Psoas muscle (tissue), 8 donors: ENCODE measurements at regions of chr16 and their contacts with region 1.

Region 1: DNA sequence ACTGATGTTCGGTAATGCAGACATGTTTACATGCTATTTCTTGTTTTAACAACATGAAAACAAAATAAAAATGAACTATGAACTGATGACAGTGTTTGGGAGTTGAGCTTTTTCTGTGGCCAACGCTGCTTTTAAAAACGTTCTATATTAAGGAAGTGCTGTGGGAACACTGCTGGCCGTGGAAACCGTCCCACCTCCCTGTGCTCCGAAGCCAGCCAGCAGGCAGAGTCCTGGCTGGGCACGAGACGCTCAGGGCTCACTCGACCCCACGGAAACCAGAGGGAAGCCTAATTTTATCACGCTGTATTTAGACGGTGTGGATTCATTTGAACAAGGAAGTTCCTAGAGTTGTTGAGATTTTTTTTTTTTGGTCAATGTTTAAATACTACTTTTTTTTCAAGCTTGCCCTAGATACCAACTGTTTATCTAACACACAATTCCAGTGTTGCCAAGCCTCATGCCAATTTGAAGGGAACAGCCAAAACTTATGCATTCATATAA is 25.8 kb downstream of the ADCY9 start:
- DNase-seq: peak in 1 of 2 donors; percentile 34
- ATAC-seq: peak in 2 of 4 donors; percentile 20 to 30
- H3K4me3 ChIP-seq: peak overlapping the region; percentile 45
- H3K27ac ChIP-seq: peak overlapping the region; percentile 90
- H3K4me1 ChIP-seq: peaks cover 78% of the 10 kb centered on the region
- H3K27me3 ChIP-seq: no peaks in the 10 kb centered on the region
- CTCF ChIP-seq: no peak

Region 2: DNA sequence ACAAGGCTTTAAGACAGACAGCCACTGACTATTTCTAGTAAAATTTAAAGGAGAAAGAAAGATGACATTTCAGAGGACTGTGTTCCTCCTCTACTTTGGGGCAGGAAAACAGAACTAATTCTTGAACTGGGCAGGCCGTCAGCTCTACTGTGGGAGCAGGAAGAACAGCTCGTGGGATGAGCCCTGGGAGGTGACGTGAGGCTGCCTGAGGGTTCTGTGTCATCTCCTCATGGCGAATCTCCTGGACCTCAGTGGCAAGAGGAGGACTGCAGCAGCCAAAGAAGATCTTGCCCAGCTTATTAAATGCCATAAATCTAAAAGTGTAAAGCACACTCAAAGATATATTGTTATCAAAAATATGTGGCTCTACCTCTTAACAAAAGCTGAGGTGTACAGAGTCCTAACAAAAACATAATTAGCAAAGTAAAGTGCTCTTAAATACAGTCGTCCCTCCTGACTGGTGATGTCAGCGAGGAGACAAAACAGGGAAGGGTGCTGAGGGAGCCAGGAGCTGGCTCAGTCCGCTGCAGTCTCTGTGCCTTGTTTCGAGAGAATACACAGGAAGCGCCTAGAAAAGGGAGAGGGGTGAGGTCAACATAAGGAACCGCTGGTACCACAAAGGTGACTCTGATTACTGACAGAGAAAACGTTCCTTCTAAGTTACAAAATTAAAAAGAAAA is 267.9 kb before region 1 on chr16:
- intact Hi-C with region 1: no loop called
- DNase-seq: peak in 1 of 2 donors; percentile 41
- ATAC-seq: peak in 2 of 4 donors; percentile 36 to 40
- H3K4me3 ChIP-seq: no peak overlapping the region
- H3K27ac ChIP-seq: peak overlapping the region; percentile 36
- H3K4me1 ChIP-seq: peaks cover 93% of the 10 kb centered on the region
- H3K27me3 ChIP-seq: no peaks in the 10 kb centered on the region
- CTCF ChIP-seq: no peak

Region 3: DNA sequence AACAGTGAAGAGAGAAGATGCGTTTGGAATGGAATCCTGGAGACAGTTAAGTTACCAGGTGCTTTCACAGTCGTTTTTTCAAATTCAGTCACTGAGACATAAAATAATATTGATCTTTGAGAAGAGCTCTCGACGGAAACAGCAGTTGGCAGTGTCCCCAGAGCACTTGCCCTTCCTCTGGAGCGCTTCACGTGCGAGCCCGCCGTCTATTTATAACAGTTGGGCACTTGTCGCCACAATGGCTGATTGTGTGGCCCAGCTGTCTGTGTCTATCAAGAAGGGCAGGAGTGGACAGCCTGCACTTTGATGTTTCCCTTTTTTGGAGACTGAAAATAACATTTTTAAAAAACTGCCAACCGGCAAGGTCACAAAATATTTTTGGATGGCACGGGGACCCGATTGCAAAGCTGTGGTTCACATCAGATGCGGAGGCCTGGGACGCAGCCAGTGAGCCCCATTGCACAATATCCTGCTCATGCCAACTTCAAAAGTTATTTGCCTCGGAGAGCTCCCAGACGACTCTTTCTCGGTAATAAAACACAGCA is 37.0 kb before region 1 on chr16:
- intact Hi-C with region 1: loop called (anchors 1 to 5 kb)
- DNase-seq: peak; percentile 78 to 92
- ATAC-seq: peak; percentile 94 to 96 (median 94)
- H3K4me3 ChIP-seq: peak overlapping the region; percentile 48
- H3K27ac ChIP-seq: peak overlapping the region; percentile 94
- H3K4me1 ChIP-seq: peaks cover 23% of the 10 kb centered on the region
- H3K27me3 ChIP-seq: no peaks in the 10 kb centered on the region
- CTCF ChIP-seq: no peak

Region 4: GRCh38 chr16:4101421-4102219 is 11.2 kb after region 1 on chr16:
- intact Hi-C with region 1: no loop called
- DNase-seq: peak; percentile 36 to 71
- ATAC-seq: peak in 3 of 4 donors; percentile 14 to 70 (median 34)
- H3K4me3 ChIP-seq: no peak overlapping the region
- H3K27ac ChIP-seq: peak overlapping the region; percentile 3
- H3K4me1 ChIP-seq: peaks cover 29% of the 10 kb centered on the region
- H3K27me3 ChIP-seq: no peaks in the 10 kb centered on the region
- CTCF ChIP-seq: no peak

Region 5: DNA sequence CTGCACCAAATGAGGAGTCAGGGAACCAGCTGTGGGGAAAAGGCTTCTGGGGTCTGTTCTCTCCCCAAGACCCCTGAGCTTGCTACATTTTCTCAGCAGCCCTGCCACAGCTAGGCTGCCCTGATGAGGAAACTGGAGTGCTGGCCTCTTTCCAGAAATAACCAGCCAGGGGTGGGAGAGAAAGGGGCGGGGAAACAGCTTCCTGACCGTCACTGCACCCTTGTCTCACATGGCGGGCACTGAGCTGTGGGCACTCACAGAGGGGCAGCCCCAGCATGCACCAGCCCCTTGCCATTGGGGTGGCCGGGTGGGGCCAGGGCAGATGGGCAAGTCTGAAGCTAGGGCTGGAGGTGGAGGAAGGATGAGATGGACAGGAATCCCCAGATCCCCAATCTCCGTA is 148.6 kb after region 1 on chr16:
- intact Hi-C with region 1: loop called in 1 of 2 experiments (anchors 5 kb)
- DNase-seq: no peak
- ATAC-seq: peak in 3 of 4 donors; percentile 6 to 23 (median 20)
- H3K4me3 ChIP-seq: peak overlapping the region; percentile 73
- H3K27ac ChIP-seq: peak overlapping the region; percentile 94
- H3K4me1 ChIP-seq: peaks cover 50% of the 10 kb centered on the region
- H3K27me3 ChIP-seq: no peaks in the 10 kb centered on the region
- CTCF ChIP-seq: no peak